Natural killer cell (primary cell): ENCODE measurements at regions of chr1 and their contacts with region 1.

Region 1: DNA sequence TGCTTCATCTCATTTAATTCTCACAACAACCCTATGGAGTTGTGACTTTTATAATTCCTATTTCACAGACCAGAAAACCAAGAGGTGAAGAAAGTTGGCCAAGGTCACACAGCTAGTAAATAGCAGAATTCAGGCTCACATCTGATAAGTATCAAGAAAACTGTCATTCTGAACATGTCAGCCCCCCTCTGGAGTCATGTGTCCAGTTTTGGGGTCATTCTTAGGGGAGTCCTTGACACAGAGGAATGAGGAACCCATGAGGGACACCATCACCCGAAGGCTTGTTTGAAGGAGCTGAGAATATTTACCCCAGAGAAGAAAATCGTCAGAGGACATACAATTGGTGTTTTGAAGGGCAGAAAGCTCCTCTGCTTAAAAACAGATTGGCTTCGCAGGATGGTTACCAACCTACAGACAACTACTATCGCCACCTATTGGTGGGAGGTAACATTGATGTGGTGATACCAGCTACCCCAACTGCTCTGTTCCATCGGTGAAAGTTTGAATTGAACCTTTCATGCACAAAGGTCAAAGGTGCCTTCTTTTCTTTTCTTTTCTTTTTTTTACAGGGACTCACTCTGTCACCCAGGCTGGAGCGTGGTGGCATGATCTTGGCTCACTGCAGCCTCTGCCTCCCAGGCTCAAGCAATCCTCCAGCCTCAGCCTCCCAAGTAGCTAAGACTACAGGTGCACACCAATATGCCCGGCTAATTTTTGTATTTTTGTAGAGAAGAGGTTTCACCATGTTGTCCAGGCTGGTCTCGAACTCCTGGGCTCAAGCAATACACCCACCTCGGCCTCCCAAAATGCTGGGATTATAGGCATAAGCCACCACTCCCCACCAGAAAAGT is 31.3 kb downstream of the NCMAP start:
- DNase-seq: peak in 1 of 2 donors; percentile 89
- ATAC-seq: peak; percentile 87 to 99 (median 96)
- H3K4me3 ChIP-seq: no peak overlapping the region
- H3K4me3 Mint-ChIP-seq: no peak overlapping the region
- H3K27ac ChIP-seq: no peak overlapping the region
- H3K27ac Mint-ChIP-seq: no peak overlapping the region
- H3K4me1 ChIP-seq: peaks cover 15% of the 10 kb centered on the region
- H3K4me1 Mint-ChIP-seq: peaks cover 0 to 5% of the 10 kb centered on the region in 2 donors
- H3K27me3 ChIP-seq: no peaks in the 10 kb centered on the region
- H3K27me3 Mint-ChIP-seq: peaks cover 8 to 12% of the 10 kb centered on the region in 2 donors
- CTCF ChIP-seq: peak; percentile 78

Region 2: GRCh38 chr1:24228311-24228710 is 358.9 kb before region 1 on chr1:
- intact Hi-C with region 1: no loop called
- DNase-seq: no peak
- ATAC-seq: no peak
- H3K4me3 ChIP-seq: no peak overlapping the region
- H3K4me3 Mint-ChIP-seq: no peak overlapping the region
- H3K27ac ChIP-seq: no peak overlapping the region
- H3K27ac Mint-ChIP-seq: no peak overlapping the region
- H3K4me1 ChIP-seq: no peaks in the 10 kb centered on the region
- H3K4me1 Mint-ChIP-seq: no peaks in the 10 kb centered on the region
- H3K27me3 ChIP-seq: no peaks in the 10 kb centered on the region
- H3K27me3 Mint-ChIP-seq: peaks cover 2 to 20% of the 10 kb centered on the region in 2 donors
- CTCF ChIP-seq: no peak

Region 3: GRCh38 chr1:24341260-24341659 is 245.9 kb before region 1 on chr1:
- intact Hi-C with region 1: no loop called
- DNase-seq: no peak
- ATAC-seq: no peak
- H3K4me3 ChIP-seq: no peak overlapping the region
- H3K4me3 Mint-ChIP-seq: no peak overlapping the region
- H3K27ac ChIP-seq: no peak overlapping the region
- H3K27ac Mint-ChIP-seq: no peak overlapping the region
- H3K4me1 ChIP-seq: no peaks in the 10 kb centered on the region
- H3K4me1 Mint-ChIP-seq: no peaks in the 10 kb centered on the region
- H3K27me3 ChIP-seq: no peaks in the 10 kb centered on the region
- H3K27me3 Mint-ChIP-seq: peaks cover 8 to 9% of the 10 kb centered on the region in 2 donors
- CTCF ChIP-seq: no peak

Region 4: DNA sequence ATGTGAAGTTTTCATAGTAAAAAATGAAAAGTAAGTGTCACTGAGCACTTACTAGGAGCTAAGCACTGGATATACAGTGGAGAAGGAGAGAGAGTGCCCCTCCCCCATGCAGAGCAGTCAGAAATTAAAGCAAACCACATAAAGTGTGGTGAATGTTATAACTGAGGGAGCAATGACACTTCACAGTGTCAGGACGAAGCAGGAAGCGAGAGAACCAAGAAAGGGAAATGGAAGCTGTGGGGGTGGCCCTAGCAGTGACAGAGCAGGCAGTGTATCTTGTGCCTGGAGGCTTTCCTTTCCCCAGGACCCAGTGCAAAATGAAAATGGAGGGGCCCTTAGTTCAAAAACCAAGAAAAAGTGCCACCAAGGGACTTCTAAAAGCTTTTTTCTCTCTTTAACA is 106.1 kb before region 1 on chr1:
- intact Hi-C with region 1: loop called (anchors 10 kb)
- DNase-seq: peak in 1 of 2 donors; percentile 74
- ATAC-seq: peak; percentile 72 to 76 (median 72)
- H3K4me3 ChIP-seq: no peak overlapping the region
- H3K4me3 Mint-ChIP-seq: peak overlapping the region; percentile 4
- H3K27ac ChIP-seq: peak overlapping the region; percentile 74
- H3K27ac Mint-ChIP-seq: peak overlapping the region; percentile 70 to 84
- H3K4me1 ChIP-seq: peaks cover 32% of the 10 kb centered on the region
- H3K4me1 Mint-ChIP-seq: peaks cover 12 to 16% of the 10 kb centered on the region in 2 donors
- H3K27me3 ChIP-seq: no peaks in the 10 kb centered on the region
- H3K27me3 Mint-ChIP-seq: no peaks in the 10 kb centered on the region
- CTCF ChIP-seq: no peak

Region 5: DNA sequence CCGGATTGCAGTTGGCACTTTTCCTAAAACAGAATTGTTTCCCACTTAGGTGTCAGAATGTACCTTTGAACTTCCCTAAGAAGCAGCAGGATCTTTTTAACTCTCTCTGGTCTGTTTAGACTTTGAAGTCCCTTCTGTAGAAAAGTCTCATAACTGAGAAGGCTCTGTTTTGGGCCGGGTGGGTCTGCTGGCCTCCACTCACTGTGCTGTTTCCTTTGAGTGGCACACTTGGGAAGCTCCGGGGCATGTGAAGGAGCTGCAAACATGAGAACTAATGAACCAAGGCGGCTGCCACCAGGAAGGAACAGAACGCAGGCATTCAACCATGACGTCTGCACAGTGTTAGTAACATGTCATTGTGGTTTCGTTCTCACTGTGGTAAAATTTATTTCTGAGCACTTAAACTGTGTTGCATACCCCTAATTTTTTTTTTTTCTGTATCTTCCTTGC is 50.8 kb before region 1 on chr1:
- intact Hi-C with region 1: no loop called
- DNase-seq: peak; percentile 56 to 94
- ATAC-seq: peak; percentile 74 to 89 (median 75)
- H3K4me3 ChIP-seq: peak overlapping the region; percentile 1
- H3K4me3 Mint-ChIP-seq: peak overlapping the region; percentile 87
- H3K27ac ChIP-seq: peak overlapping the region; percentile 90
- H3K27ac Mint-ChIP-seq: peak overlapping the region; percentile 89 to 93
- H3K4me1 ChIP-seq: peaks cover 21% of the 10 kb centered on the region
- H3K4me1 Mint-ChIP-seq: peaks cover 24 to 25% of the 10 kb centered on the region in 2 donors
- H3K27me3 ChIP-seq: no peaks in the 10 kb centered on the region
- H3K27me3 Mint-ChIP-seq: peaks cover 3 to 16% of the 10 kb centered on the region in 2 donors
- CTCF ChIP-seq: no peak